ENCODE measurements at regions of chr6 and their contacts with region 1.

Region 1: GRCh38 chr6:2931970-2932748 is 29.1 kb upstream of the SERPINB9 start:
- DNase-seq: peak; percentile 95
- ATAC-seq: peak; percentile 93
- H3K4me3 Mint-ChIP-seq: no peak overlapping the region
- H3K27ac Mint-ChIP-seq: peak overlapping the region; percentile 92; the same call in 1 of the 2 replicates
- H3K4me1 Mint-ChIP-seq: peaks cover 50% of the 10 kb centered on the region
- H3K27me3 Mint-ChIP-seq: no peaks in the 10 kb centered on the region
- CTCF ChIP-seq: peak; percentile 88

Region 2: DNA sequence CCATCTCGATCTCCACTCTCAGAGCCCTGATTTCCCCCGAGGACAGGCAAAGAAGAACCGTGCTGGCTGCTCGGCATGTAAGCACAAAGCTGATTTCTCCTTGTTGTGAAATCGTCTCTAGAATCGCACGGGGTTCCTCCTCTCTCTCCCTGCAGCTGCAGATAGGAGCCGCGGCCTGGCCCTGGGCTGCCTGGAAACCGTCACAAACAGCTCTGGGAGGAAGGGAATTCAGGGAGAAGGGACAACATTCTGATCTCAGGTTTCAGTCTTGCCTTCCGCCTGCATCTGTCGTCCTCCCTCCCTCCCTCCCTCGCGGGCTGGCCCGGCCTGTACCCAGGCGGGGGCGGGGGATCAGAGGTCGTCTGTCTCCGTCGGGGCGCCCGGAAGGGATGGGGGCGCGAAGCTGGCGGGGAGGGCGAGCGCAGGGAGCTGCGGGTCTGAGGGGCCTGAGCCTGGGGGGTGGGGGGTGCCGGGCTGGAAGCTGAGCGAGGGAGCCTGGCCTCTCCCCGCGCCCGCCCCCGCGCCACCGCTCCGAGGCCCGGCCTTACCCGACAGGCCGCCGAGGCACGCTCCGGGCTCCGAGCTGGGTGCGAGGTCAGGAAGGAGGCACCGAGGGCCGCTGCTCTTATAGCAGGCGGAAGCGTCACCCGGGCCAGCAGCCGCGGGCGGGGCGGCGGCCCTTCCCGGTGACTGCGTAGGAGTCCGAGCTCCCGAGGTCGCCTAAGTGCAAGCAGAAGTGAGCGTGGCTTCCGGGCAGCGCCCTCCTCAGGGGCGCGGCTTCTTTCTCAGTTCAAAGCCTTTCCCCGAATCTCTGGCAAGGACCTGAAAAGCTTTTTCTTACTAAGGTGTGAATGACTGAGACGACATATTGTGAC is 90.7 kb before region 1 on chr6 and contains the start of gene SERPINB1:
- CTCF ChIA-PET with region 1: interaction called, 70 read pairs
- POLR2A ChIA-PET with region 1: interaction called, 4 read pairs
- DNase-seq: peak; percentile 87
- ATAC-seq: peak; percentile 92
- H3K4me3 Mint-ChIP-seq: peak within 1 kb of the TSS; percentile 91
- H3K27ac Mint-ChIP-seq: peak within 1 kb of the TSS; percentile 100
- H3K4me1 Mint-ChIP-seq: peaks cover 37% of the 10 kb centered on the region
- H3K27me3 Mint-ChIP-seq: no peaks in the 10 kb centered on the region; the same call in 1 of the 2 replicates
- CTCF ChIP-seq: no peak
- total RNA-seq, gene SERPINB1: 14.8 to 21.1 TPM (median 16.9 TPM) in 3 replicates

Region 3: DNA sequence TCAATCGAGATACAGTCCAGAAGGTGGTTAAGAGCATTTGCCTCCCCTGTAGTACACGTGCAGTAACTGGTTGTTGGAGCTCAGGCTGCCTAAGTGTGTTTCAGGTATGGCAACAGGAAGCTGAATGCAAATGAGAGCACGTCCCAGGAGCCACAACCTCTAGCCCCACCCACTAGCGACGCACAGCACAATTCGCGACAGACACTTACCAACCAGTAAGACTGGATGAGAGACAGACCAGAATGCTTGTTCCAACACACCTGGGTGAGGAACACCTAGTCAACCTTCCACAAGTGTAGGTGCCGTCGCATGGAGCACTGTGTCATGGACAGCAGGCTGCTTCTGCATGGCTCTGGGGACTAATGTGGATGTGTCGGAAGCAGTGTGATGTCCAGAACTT is 83.3 kb before region 1 on chr6:
- CTCF ChIA-PET with region 1: interaction called, 70 read pairs
- POLR2A ChIA-PET with region 1: interaction called, 4 read pairs
- DNase-seq: peak; percentile 63
- ATAC-seq: peak; percentile 82
- H3K4me3 Mint-ChIP-seq: 0 out of 2 replicates have a peak overlapping the region, but pooled peaks have one; percentile 0
- H3K27ac Mint-ChIP-seq: peak overlapping the region; percentile 88
- H3K4me1 Mint-ChIP-seq: peaks cover 37% of the 10 kb centered on the region
- H3K27me3 Mint-ChIP-seq: no peaks in the 10 kb centered on the region
- CTCF ChIP-seq: no peak

Region 4: DNA sequence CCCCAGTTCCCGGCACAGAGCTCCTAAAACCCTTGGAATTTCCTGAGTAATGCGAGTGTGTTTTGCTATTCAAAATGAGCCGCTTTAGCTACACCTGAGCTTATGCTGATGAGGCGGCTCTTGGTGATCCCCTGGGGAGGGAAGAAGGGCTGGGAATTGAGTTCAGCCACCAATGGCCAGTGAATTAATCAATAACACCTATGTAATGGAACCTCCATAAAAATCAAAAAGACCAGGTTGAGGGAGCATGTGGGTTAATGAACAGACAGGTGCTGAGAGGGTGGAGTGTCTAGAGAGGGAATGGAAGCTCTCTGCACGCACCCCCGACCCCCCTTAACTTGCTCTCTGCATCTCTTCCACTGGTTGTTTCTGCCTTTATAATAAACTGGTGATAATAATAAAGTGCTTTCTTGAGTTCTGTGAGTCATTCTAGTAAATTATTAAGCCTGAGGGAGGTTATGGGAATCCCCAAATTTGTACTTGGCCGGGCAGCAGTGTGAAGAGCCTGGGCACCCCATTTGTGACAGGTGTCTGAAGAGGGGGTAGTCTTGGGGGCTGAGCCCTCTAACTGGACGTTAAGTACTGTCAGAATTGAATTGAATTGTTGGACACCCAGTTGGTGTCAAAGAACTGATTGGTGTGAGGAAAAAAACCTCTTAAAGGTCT is 65.8 kb before region 1 on chr6:
- CTCF ChIA-PET with region 1: interaction called, 10 read pairs
- POLR2A ChIA-PET with region 1: no interaction called
- DNase-seq: no peak
- ATAC-seq: peak; percentile 78
- H3K4me3 Mint-ChIP-seq: peak overlapping the region; percentile 47
- H3K27ac Mint-ChIP-seq: peak overlapping the region; percentile 89
- H3K4me1 Mint-ChIP-seq: peaks cover 71% of the 10 kb centered on the region
- H3K27me3 Mint-ChIP-seq: no peaks in the 10 kb centered on the region
- CTCF ChIP-seq: no peak

Region 5: GRCh38 chr6:2917065-2917464 is 15.1 kb before region 1 on chr6:
- CTCF ChIA-PET with region 1: interaction called, 26 read pairs
- POLR2A ChIA-PET with region 1: no interaction called
- DNase-seq: no peak
- ATAC-seq: peak; percentile 43
- H3K4me3 Mint-ChIP-seq: no peak overlapping the region
- H3K27ac Mint-ChIP-seq: peak overlapping the region; percentile 86
- H3K4me1 Mint-ChIP-seq: peaks cover 70% of the 10 kb centered on the region
- H3K27me3 Mint-ChIP-seq: peaks cover 8% of the 10 kb centered on the region
- CTCF ChIP-seq: peak; percentile 20; the same call in 1 of the 2 replicates

Region 6: GRCh38 chr6:3057063-3057770 is 125.1 kb after region 1 on chr6:
- CTCF ChIA-PET with region 1: no interaction called
- POLR2A ChIA-PET with region 1: no interaction called
- DNase-seq: no peak
- ATAC-seq: no peak
- H3K4me3 Mint-ChIP-seq: no peak overlapping the region
- H3K27ac Mint-ChIP-seq: no peak overlapping the region
- H3K4me1 Mint-ChIP-seq: peaks cover 29% of the 10 kb centered on the region
- H3K27me3 Mint-ChIP-seq: peaks cover 11% of the 10 kb centered on the region
- CTCF ChIP-seq: no peak

Measured in WTC11 (cell line).